Naive thymus-derived CD4-positive, alpha-beta T cell (primary cell): ENCODE measurements at regions of chrX and their contacts with region 1.

Region 1: DNA sequence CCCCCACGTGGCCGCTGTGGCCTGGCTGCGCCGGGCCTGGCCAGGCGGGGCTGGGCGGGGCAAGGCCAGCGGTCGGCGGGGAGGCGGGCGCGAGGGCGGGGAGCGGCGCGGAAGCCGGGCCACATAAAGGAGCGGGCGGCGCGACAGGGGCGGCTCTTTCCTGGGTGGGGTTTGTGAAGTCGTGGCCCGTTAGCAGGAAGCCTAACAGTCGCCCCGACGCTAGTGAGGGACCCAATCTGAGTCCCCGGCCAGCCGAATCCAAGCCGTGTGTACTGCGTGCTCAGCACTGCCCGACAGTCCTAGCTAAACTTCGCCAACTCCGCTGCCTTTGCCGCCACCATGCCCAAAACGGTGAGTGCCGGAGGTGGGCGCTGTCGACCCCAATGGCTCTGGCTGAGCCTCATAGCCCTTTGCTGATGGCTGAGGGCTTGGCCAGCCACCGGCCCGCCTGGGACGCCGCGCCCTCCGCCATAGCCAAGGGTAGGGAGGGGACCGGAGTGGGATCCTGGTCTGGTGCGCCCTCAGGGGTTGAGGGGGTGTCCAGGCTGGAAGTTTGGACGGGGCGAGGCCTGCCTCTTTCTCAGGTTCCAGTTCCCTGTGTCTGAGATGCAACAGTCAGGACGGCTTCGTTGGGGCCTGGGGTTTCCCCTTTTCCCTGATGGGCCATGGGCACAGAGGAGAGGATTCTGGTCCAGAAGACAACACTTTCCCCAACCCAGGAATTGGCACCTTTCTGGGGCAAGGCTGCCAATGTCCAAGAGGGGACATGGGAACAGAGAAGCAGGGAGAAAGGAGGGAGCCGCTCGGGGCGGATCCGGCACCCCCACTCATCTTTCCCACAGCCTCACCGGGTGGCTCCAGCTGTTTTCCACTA is at the start of gene MSN:
- DNase-seq: peak; percentile 46 to 81 (median 65)
- ATAC-seq: peak; percentile 92
- H3K4me3 ChIP-seq: peak within 1 kb of the TSS; percentile 81
- H3K4me3 Mint-ChIP-seq: peak within 1 kb of the TSS; percentile 88 to 99 (median 95)
- H3K27ac ChIP-seq: peak within 1 kb of the TSS; percentile 79
- H3K27ac Mint-ChIP-seq: peak within 1 kb of the TSS; percentile 80 to 97 (median 93)
- H3K4me1 ChIP-seq: peaks cover 11 to 12% of the 10 kb centered on the region in 2 donors
- H3K4me1 Mint-ChIP-seq: peaks cover 29 to 41% (median 34%) of the 10 kb centered on the region in 7 donors
- H3K27me3 ChIP-seq: no peaks in the 10 kb centered on the region
- H3K27me3 Mint-ChIP-seq: no peaks in the 10 kb centered on the region
- total RNA-seq, gene MSN: 267 to 635 (median 274) TPM

Region 2: DNA sequence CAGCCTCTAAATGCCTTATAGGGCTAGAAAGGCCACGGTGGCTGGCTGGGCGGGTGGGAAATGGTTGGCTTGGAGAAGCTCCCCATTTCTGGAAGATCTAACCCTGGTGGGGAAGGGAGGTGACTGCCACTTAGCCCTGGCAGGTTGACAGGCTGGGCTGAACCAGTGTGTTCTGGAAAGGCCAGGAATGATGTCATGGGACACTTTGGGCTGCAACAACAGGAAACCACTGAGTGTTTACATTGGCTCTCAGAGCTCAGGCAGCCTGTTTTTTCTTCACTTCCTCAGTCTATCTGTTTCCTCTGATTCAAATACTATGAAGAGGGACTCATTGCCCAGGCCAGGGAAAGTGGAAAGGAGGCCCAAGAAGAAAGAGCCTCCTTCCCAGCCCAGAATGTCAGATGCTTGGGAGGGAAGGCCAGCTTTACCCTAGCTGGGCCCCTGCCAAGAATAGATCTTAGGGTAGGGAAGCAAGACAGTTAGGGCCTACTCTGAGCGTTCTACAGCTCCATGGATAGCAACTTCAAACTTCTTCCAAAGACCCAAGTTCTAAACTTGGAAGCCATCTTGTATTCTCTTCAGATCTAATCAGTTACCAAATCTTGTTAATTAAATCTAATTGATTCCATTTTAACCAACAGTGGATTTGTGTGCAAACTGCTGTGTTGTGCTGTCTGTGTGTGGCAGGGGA is 66.1 kb before region 1 on chrX:
- CTCF ChIA-PET with region 1: interaction called, 5 read pairs
- POLR2A ChIA-PET with region 1: interaction called, 44 read pairs
- intact Hi-C with region 1: no loop called
- DNase-seq: peak in 8 of 9 donors; percentile 34 to 74 (median 48)
- ATAC-seq: peak; percentile 83
- H3K4me3 ChIP-seq: peak overlapping the region; percentile 27
- H3K4me3 Mint-ChIP-seq: peak overlapping the region; percentile 35 to 73 (median 60)
- H3K27ac ChIP-seq: peak overlapping the region; percentile 59
- H3K27ac Mint-ChIP-seq: peak overlapping the region; percentile 89 to 100 (median 95)
- H3K4me1 ChIP-seq: peaks cover 52 to 60% of the 10 kb centered on the region in 2 donors
- H3K4me1 Mint-ChIP-seq: peaks cover 35 to 89% (median 76%) of the 10 kb centered on the region in 7 donors
- H3K27me3 ChIP-seq: no peaks in the 10 kb centered on the region
- H3K27me3 Mint-ChIP-seq: no peaks in the 10 kb centered on the region

Region 3: DNA sequence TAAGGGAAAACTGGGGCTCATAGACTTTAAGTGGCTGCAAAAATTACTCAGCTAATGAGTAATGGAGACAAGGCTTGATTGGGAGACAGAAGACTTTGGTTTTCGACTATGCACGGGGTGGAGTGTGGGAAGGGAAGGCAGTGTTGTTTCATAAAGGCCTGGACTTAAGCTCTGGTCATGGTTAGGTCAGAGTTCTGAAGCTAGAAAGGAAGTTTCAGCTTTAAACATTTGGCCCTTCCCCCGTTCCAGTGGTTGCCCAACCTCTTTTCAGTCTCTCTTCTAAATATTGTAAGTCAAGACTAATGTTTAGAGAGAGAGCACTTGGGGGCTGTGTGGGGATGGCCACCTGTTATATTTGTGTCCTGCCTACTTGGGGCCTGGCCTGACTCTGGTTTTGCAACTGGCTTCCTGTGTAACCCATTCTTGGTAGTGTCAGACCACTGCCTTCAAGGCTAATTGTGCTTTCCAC is 20.7 kb after region 1 on chrX:
- CTCF ChIA-PET with region 1: interaction called, 3 read pairs
- POLR2A ChIA-PET with region 1: interaction called, 3 read pairs
- intact Hi-C with region 1: loop called in 1 of 2 experiments (anchors 2 kb)
- DNase-seq: no peak
- ATAC-seq: peak; percentile 60
- H3K4me3 ChIP-seq: no peak overlapping the region
- H3K4me3 Mint-ChIP-seq: peak overlapping the region in 9 of 10 donors; percentile 40 to 76 (median 63)
- H3K27ac ChIP-seq: peak overlapping the region; percentile 45
- H3K27ac Mint-ChIP-seq: peak overlapping the region; percentile 66 to 95 (median 91)
- H3K4me1 ChIP-seq: peaks cover 76 to 81% of the 10 kb centered on the region in 2 donors
- H3K4me1 Mint-ChIP-seq: peaks cover 49 to 98% (median 83%) of the 10 kb centered on the region in 7 donors
- H3K27me3 ChIP-seq: no peaks in the 10 kb centered on the region
- H3K27me3 Mint-ChIP-seq: no peaks in the 10 kb centered on the region

Region 4: DNA sequence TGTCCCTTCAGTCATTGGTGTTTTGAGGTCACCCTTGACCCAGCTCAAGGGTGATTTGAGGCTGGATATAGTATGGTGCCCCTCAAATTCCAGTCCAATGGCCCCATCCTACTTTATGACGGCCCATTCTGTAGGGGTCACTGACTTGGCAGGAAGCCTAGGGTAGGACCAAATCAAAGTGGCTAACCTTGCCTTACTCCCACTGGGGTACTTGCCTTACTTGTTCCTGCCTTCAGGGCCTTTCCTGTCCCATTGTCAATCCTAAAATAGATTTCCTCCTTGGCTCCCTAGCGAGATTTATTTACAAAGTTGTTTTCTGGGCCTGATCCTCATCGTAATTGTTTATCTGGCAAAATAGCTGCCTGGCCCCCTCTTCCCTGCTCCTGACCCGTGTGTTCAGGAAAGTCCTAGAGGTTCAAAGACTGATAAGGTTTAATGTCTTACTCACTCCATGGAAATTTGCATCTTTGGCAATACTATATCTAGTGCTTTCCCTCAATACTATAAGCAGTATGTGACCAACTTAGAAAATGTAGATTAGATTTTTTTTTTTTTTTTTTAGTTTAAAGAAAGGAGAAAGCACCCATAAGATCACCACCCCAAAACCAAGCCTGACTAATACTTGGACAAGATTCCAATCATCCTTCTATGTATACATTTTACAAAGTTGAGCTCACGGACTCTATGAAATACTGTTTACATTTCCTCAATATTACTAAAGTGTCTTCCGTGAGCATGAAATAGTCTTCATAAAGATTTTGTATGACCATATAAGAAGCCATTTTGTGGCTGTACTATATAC is 44.5 kb after region 1 on chrX:
- CTCF ChIA-PET with region 1: no interaction called
- POLR2A ChIA-PET with region 1: no interaction called
- intact Hi-C with region 1: no loop called
- DNase-seq: no peak
- ATAC-seq: no peak
- H3K4me3 ChIP-seq: no peak overlapping the region
- H3K4me3 Mint-ChIP-seq: peak overlapping the region in 5 of 10 donors; percentile 4 to 53 (median 29)
- H3K27ac ChIP-seq: no peak overlapping the region
- H3K27ac Mint-ChIP-seq: peak overlapping the region in 5 of 9 donors; percentile 34 to 75 (median 60)
- H3K4me1 ChIP-seq: peaks cover 37 to 39% of the 10 kb centered on the region in 2 donors
- H3K4me1 Mint-ChIP-seq: peaks cover 32 to 79% (median 68%) of the 10 kb centered on the region in 7 donors
- H3K27me3 ChIP-seq: no peaks in the 10 kb centered on the region
- H3K27me3 Mint-ChIP-seq: no peaks in the 10 kb centered on the region

Region 5: GRCh38 chrX:65723706-65724105 is 56.0 kb after region 1 on chrX:
- CTCF ChIA-PET with region 1: interaction called, 3 read pairs
- POLR2A ChIA-PET with region 1: interaction called, 8 read pairs
- intact Hi-C with region 1: loop called (anchors 1 to 5 kb)
- DNase-seq: peak in 3 of 9 donors; percentile 16 to 50 (median 20)
- ATAC-seq: peak; percentile 59
- H3K4me3 ChIP-seq: no peak overlapping the region
- H3K4me3 Mint-ChIP-seq: peak overlapping the region; percentile 22 to 75 (median 60)
- H3K27ac ChIP-seq: peak overlapping the region; percentile 66
- H3K27ac Mint-ChIP-seq: peak overlapping the region; percentile 41 to 92 (median 84)
- H3K4me1 ChIP-seq: peaks cover 54 to 68% of the 10 kb centered on the region in 2 donors
- H3K4me1 Mint-ChIP-seq: peaks cover 45 to 95% (median 86%) of the 10 kb centered on the region in 7 donors
- H3K27me3 ChIP-seq: no peaks in the 10 kb centered on the region
- H3K27me3 Mint-ChIP-seq: no peaks in the 10 kb centered on the region

Region 6: GRCh38 chrX:65745992-65746391 is 78.3 kb after region 1 on chrX:
- CTCF ChIA-PET with region 1: no interaction called
- POLR2A ChIA-PET with region 1: no interaction called
- intact Hi-C with region 1: no loop called
- DNase-seq: no peak
- ATAC-seq: no peak
- H3K4me3 ChIP-seq: no peak overlapping the region
- H3K4me3 Mint-ChIP-seq: peak overlapping the region in 5 of 10 donors; percentile 1 to 25 (median 10)
- H3K27ac ChIP-seq: no peak overlapping the region
- H3K27ac Mint-ChIP-seq: peak overlapping the region in 8 of 9 donors; percentile 7 to 82 (median 58)
- H3K4me1 ChIP-seq: peaks cover 10 to 17% of the 10 kb centered on the region in 2 donors
- H3K4me1 Mint-ChIP-seq: peaks cover 31 to 66% (median 52%) of the 10 kb centered on the region in 7 donors
- H3K27me3 ChIP-seq: no peaks in the 10 kb centered on the region
- H3K27me3 Mint-ChIP-seq: no peaks in the 10 kb centered on the region

Region 7: DNA sequence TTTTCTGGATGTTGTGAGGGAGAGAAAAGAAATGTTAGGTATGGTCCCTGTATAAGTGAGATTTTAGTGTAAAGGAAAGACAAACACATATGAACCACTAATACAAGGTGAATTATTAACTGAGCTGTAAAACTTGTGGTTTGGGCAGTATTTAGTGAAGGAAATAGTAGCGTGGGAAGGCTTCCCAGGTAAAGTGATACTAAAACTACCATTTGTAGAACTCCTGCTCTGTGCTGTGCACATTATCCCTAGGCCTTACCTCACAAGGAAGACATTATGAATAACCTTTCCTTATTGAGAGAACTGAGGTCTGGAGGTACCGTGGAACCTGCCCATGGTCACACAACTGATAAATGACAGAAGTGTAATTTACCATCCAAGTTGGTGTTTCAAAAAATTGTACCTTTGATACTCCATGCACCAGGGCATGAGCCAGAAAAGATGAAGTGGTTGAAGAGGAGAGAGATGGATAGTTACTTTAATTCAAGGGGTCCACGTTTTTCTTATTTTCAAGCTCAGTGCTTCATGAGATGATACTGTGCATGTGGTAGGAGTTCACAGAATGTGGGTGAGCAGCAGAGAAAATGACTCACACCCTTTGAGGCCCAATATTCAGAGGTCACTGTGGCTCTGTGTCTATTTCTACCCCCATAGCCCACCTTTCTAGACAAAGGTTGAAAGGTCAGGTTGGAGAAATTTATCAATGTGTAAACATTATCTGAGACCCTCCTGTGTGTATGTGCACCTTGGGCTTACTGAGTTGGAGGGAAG is 374.8 kb after region 1 on chrX:
- CTCF ChIA-PET with region 1: no interaction called
- POLR2A ChIA-PET with region 1: no interaction called
- intact Hi-C with region 1: no loop called
- DNase-seq: no peak
- ATAC-seq: no peak
- H3K4me3 ChIP-seq: no peak overlapping the region
- H3K4me3 Mint-ChIP-seq: no peak overlapping the region
- H3K27ac ChIP-seq: no peak overlapping the region
- H3K27ac Mint-ChIP-seq: no peak overlapping the region
- H3K4me1 ChIP-seq: peaks cover 11 to 14% of the 10 kb centered on the region in 2 donors
- H3K4me1 Mint-ChIP-seq: peaks cover 15 to 29% (median 26%) of the 10 kb centered on the region in 7 donors
- H3K27me3 ChIP-seq: no peaks in the 10 kb centered on the region
- H3K27me3 Mint-ChIP-seq: no peaks in the 10 kb centered on the region

Region 8: DNA sequence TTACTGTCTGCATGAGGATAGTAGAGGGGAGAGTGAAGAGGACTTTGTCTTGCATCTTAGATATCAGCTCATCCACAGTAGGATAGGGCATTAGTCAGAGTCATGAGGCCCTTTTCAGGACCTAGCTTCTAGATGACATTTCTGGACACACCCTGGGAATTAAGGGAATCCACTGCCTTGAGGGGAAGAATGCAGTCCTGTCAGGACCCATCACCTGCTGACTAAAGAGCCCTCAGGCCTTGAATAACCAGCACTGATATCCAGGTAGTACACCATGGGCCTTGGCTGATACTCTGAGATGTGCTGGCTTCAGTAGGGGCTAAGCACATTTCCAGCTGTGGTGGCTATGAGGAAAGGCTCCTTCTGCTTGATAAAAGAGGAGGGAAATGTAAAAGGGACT is 836.7 kb after region 1 on chrX:
- CTCF ChIA-PET with region 1: no interaction called
- POLR2A ChIA-PET with region 1: no interaction called
- intact Hi-C with region 1: no loop called
- DNase-seq: no peak
- ATAC-seq: no peak
- H3K4me3 ChIP-seq: no peak overlapping the region
- H3K4me3 Mint-ChIP-seq: no peak overlapping the region
- H3K27ac ChIP-seq: no peak overlapping the region
- H3K27ac Mint-ChIP-seq: no peak overlapping the region
- H3K4me1 ChIP-seq: no peaks in the 10 kb centered on the region
- H3K4me1 Mint-ChIP-seq: no peaks in the 10 kb centered on the region
- H3K27me3 ChIP-seq: no peaks in the 10 kb centered on the region
- H3K27me3 Mint-ChIP-seq: peaks cover 0 to 4% (median 0%) of the 10 kb centered on the region in 5 donors